ENCODE measurements at regions of chr10 and their contacts with region 1.

Region 1: DNA sequence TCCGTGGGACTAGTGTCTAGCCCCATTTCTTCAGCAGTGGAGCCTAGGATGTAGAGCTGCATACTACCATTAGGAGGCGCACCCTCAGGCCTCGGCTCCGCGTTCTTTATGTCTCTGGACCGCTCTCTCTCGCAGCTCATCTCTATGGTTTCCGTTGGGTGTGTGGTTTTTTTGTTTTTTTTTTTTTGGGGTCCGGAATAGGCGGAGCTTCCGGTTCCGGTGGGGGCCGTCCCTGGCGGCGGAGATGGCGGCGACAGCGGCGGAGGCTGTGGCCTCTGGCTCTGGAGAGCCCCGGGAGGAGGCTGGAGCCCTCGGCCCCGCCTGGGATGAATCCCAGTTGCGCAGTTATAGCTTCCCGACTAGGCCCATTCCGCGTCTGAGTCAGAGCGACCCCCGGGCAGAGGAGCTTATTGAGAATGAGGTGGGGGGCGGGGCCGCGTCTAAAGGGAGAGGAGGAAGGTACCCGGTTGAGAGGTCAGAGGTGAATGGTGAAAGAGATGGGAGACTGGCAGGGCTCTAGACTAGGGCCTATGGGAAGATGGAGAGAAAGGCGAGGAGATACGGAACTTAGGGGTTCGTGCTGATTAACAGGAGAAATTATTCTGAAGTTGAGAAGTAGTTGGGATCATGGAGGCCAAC is at the start of gene HIF1AN:
- DNase-seq: peak; percentile 89
- H3K4me3 ChIP-seq: peak within 1 kb of the TSS; percentile 88
- H3K27ac ChIP-seq: no peak within 1 kb of the TSS
- H3K27me3 ChIP-seq: no peaks in the 10 kb centered on the region
- CTCF ChIP-seq: peak; percentile 98
- polyA plus RNA-seq, gene HIF1AN: 29.7 and 31.0 TPM in 2 replicates

Region 2: GRCh38 chr10:100551196-100551595 is 15.4 kb after region 1 on chr10:
- CTCF ChIA-PET with region 1: interaction called, 31 read pairs
- POLR2A ChIA-PET with region 1: interaction called, 3 read pairs
- DNase-seq: no peak
- H3K4me3 ChIP-seq: no peak overlapping the region
- H3K27ac ChIP-seq: no peak overlapping the region
- H3K27me3 ChIP-seq: no peaks in the 10 kb centered on the region
- CTCF ChIP-seq: no peak

Measured in AG04450 (cell line).